IMR-90 (cell line): ENCODE measurements at regions of chr20 and their contacts with region 1.

Region 1: GRCh38 chr20:35284267-35284991 is at the start of gene EIF6:
- DNase-seq: peak; percentile 87
- ATAC-seq: peak; percentile 89
- H3K4me3 ChIP-seq: peak within 1 kb of the TSS; percentile 82
- H3K27ac ChIP-seq: peak within 1 kb of the TSS; percentile 91
- H3K4me1 ChIP-seq: peaks cover 5% of the 10 kb centered on the region
- H3K27me3 ChIP-seq: no peaks in the 10 kb centered on the region
- CTCF ChIP-seq: no peak
- POLR2A ChIP-seq: peak; percentile 86
- RAD21 ChIP-seq: no peak
- total RNA-seq, gene EIF6: 215 and 227 TPM in 2 replicates

Region 2: GRCh38 chr20:35387334-35387733 is 102.9 kb after region 1 on chr20:
- CTCF ChIA-PET with region 1: no interaction called
- POLR2A ChIA-PET with region 1: interaction called, 14 read pairs
- dilution Hi-C with region 1: no loop called
- in situ Hi-C with region 1: no loop called
- intact Hi-C with region 1: no loop called
- DNase-seq: peak; percentile 63
- ATAC-seq: peak; percentile 64; the same call in 1 of the 2 replicates
- H3K4me3 ChIP-seq: no peak overlapping the region
- H3K27ac ChIP-seq: no peak overlapping the region
- H3K4me1 ChIP-seq: peaks cover 6% of the 10 kb centered on the region; the same call in 1 of the 2 replicates
- H3K27me3 ChIP-seq: no peaks in the 10 kb centered on the region
- CTCF ChIP-seq: no peak
- POLR2A ChIP-seq: no peak
- RAD21 ChIP-seq: no peak